ENCODE measurements at regions of chrX and their contacts with region 1.

Region 1: DNA sequence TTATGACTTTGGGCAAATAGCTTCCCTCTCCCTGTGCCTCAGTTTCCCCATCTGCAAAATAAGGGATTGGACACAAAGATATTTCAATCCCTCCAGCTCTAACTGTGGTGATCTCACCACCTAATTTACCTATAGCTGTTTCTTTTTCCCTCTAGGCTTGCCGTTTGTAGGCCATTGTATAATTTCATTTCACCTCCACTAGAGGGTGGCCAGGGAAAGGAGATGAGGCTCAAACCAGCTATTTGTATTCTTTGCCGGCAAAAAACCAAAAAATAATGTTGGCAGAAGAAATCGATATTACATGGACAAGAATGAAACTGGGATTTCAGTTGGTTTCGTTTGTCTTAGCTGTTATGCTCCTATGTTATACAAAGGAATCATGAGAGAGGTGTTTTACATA is 36.1 kb upstream of the DOCK11 start:
- DNase-seq: no peak
- H3K4me3 ChIP-seq: peak overlapping the region in 4 of 59 donors; percentile 14 to 46 (median 26)
- H3K27ac ChIP-seq: no peak overlapping the region
- H3K27me3 ChIP-seq: peaks cover 0 to 36% (median 3%) of the 10 kb centered on the region in 45 donors
- CTCF ChIP-seq: peak in 54 of 56 donors; percentile 19 to 72 (median 52)

Region 2: GRCh38 chrX:118520216-118521206 is 61.0 kb after region 1 on chrX:
- intact Hi-C with region 1: no loop called
- DNase-seq: no peak
- H3K4me3 ChIP-seq: no peak overlapping the region
- H3K27ac ChIP-seq: no peak overlapping the region
- H3K27me3 ChIP-seq: peaks cover 0 to 60% (median 3%) of the 10 kb centered on the region in 45 donors
- CTCF ChIP-seq: no peak

Region 3: GRCh38 chrX:118603981-118604380 is 144.5 kb after region 1 on chrX:
- intact Hi-C with region 1: loop called in 1 of 2 experiments (anchors 2 kb)
- DNase-seq: peak in 5 of 10 donors; percentile 10 to 46 (median 36)
- H3K4me3 ChIP-seq: peak overlapping the region in 24 of 59 donors; percentile 3 to 42 (median 26)
- H3K27ac ChIP-seq: peak overlapping the region in 4 of 59 donors; percentile 3 to 35 (median 29)
- H3K27me3 ChIP-seq: peaks cover 0 to 44% (median 3%) of the 10 kb centered on the region in 45 donors
- CTCF ChIP-seq: peak; percentile 51 to 91 (median 82)

Measured in dorsolateral prefrontal cortex (tissue), 120 donors.